T-cell (primary cell): ENCODE measurements at regions of chr2 and their contacts with region 1.

Region 1: GRCh38 chr2:172282944-172283343 is 144.4 kb upstream of the ITGA6 start:
- DNase-seq: no peak
- ATAC-seq: no peak
- H3K4me3 ChIP-seq: no peak overlapping the region
- H3K4me3 Mint-ChIP-seq: no peak overlapping the region
- H3K27ac ChIP-seq: no peak overlapping the region
- H3K27ac Mint-ChIP-seq: no peak overlapping the region
- H3K4me1 ChIP-seq: peaks cover 3 to 15% of the 10 kb centered on the region in 2 experiments
- H3K4me1 Mint-ChIP-seq: peaks cover 27 to 31% (median 27%) of the 10 kb centered on the region in 3 donors
- H3K27me3 ChIP-seq: peaks cover 0 to 7% of the 10 kb centered on the region in 2 experiments
- H3K27me3 Mint-ChIP-seq: peaks cover 0 to 1% of the 10 kb centered on the region in 2 donors

Region 2: GRCh38 chr2:172081221-172082022 is 201.5 kb before region 1 on chr2:
- CTCF ChIA-PET with region 1: interaction called in 1 of 2 experiments, 16 read pairs
- POLR2A ChIA-PET with region 1: no interaction called
- DNase-seq: peak in 2 of 35 experiments; percentile 6 to 24
- ATAC-seq: no peak
- H3K4me3 ChIP-seq: no peak overlapping the region
- H3K4me3 Mint-ChIP-seq: no peak overlapping the region
- H3K27ac ChIP-seq: no peak overlapping the region
- H3K27ac Mint-ChIP-seq: peak overlapping the region in 1 of 2 donors; percentile 16
- H3K4me1 ChIP-seq: peaks cover 9 to 52% of the 10 kb centered on the region in 2 experiments
- H3K4me1 Mint-ChIP-seq: peaks cover 29 to 41% (median 40%) of the 10 kb centered on the region in 3 donors
- H3K27me3 ChIP-seq: peaks cover 18 to 78% of the 10 kb centered on the region in 2 experiments
- H3K27me3 Mint-ChIP-seq: peaks cover 69 to 80% of the 10 kb centered on the region in 2 donors

Region 3: DNA sequence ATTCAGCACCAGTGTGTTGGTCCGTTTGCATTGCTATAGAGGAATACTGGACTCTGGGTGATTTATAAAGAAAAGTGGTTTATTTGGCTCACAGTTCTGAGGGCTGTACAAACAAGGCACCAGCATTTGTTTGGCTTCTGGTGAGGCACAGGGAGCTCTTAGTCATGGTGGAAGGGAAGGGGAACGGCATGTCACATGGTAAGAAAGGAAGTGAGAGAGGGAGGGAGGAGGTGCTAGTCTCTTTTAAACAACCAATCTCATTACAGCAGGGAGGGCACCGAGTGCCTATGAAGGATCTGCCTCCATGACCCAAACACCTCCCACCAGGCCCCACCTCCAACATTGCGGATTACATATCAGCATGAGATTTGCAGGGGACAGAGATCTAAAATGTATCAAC is 36.3 kb before region 1 on chr2:
- CTCF ChIA-PET with region 1: no interaction called
- POLR2A ChIA-PET with region 1: interaction called in 1 of 2 experiments, 12 read pairs
- DNase-seq: no peak
- ATAC-seq: no peak
- H3K4me3 ChIP-seq: no peak overlapping the region
- H3K4me3 Mint-ChIP-seq: no peak overlapping the region
- H3K27ac ChIP-seq: no peak overlapping the region
- H3K27ac Mint-ChIP-seq: no peak overlapping the region
- H3K4me1 ChIP-seq: peaks cover 0 to 6% of the 10 kb centered on the region in 2 experiments
- H3K4me1 Mint-ChIP-seq: peaks cover 8 to 17% (median 15%) of the 10 kb centered on the region in 3 donors
- H3K27me3 ChIP-seq: peaks cover 0 to 7% of the 10 kb centered on the region in 2 experiments
- H3K27me3 Mint-ChIP-seq: no peaks in the 10 kb centered on the region